ENCODE measurements at regions of chr6 and their contacts with region 1.

Region 1: DNA sequence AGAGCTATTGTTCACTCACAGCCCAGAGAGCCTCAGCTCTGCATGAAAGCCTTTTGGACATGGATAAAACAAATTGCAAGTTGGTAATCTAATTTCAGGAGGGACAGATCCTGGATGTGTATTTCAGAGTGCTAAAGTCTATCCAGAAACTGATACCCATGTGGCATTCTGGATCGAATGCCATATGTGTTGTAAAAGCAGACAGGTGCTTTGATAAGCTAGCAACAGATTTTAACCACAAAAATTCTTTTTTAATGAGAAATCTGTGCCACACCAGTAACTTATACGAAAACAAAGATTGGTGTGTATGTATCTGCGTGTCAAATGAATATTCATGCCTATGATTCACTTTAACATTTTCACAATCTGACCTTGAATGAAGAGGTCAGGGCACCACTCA is 936.6 kb upstream of the MAP3K7 start:
- DNase-seq: no peak
- H3K4me3 ChIP-seq: no peak overlapping the region
- H3K27ac ChIP-seq: no peak overlapping the region
- H3K4me1 ChIP-seq: no peaks in the 10 kb centered on the region
- H3K27me3 ChIP-seq: no peaks in the 10 kb centered on the region
- CTCF ChIP-seq: no peak

Region 2: DNA sequence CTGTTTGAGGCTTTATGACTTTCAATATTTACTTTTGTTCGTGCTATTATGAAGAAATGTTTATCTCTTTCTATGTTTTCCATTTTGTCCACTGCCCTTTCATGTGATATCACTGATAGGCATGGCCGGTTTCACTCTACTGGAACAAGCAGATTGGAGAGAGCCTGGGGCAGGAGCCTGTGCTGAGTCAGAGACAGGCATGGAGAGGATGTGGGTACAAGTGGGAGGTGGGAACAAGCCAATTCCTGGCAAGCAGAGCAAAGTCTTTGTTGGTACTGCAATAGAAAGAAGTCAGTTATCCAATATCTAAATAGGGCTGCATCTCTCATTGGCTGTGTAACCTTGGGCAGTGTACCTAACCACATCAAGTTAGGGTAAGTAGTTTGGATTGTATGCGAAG is 391.1 kb before region 1 on chr6:
- CTCF ChIA-PET with region 1: no interaction called
- POLR2A ChIA-PET with region 1: no interaction called
- intact Hi-C with region 1: no loop called
- DNase-seq: no peak
- H3K4me3 ChIP-seq: no peak overlapping the region
- H3K27ac ChIP-seq: no peak overlapping the region
- H3K4me1 ChIP-seq: no peaks in the 10 kb centered on the region
- H3K27me3 ChIP-seq: no peaks in the 10 kb centered on the region
- CTCF ChIP-seq: no peak

Region 3: GRCh38 chr6:91626911-91627310 is 103.4 kb after region 1 on chr6:
- CTCF ChIA-PET with region 1: interaction called, 10 read pairs
- POLR2A ChIA-PET with region 1: no interaction called
- intact Hi-C with region 1: no loop called
- DNase-seq: peak in 1 of 2 experiments; percentile 24
- H3K4me3 ChIP-seq: no peak overlapping the region
- H3K27ac ChIP-seq: no peak overlapping the region
- H3K4me1 ChIP-seq: no peaks in the 10 kb centered on the region
- H3K27me3 ChIP-seq: no peaks in the 10 kb centered on the region
- CTCF ChIP-seq: no peak

Region 4: DNA sequence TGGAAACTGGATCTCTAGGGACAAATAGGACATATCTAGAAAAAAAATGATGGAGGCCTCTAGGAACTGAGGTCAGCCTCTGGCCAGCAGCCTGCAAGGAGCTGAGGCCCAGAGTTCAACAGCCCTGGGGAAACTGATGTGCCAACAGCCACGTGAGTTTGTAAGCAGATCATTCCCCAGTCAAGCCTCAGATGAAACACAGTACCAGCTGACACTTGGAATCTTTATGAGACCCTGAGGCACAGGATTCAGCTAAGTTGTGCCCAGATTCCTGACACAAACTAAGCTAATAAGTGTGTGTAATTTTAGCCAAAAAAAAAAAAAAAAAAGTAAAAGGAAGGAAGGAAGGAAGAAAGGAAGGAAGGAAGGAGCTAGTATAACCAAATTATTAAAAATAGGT is 123.1 kb after region 1 on chr6:
- CTCF ChIA-PET with region 1: no interaction called
- POLR2A ChIA-PET with region 1: no interaction called
- intact Hi-C with region 1: no loop called
- DNase-seq: no peak
- H3K4me3 ChIP-seq: no peak overlapping the region
- H3K27ac ChIP-seq: no peak overlapping the region
- H3K4me1 ChIP-seq: no peaks in the 10 kb centered on the region
- H3K27me3 ChIP-seq: no peaks in the 10 kb centered on the region
- CTCF ChIP-seq: no peak